ENCODE measurements at regions of chr6 and their contacts with region 1.

Region 1: DNA sequence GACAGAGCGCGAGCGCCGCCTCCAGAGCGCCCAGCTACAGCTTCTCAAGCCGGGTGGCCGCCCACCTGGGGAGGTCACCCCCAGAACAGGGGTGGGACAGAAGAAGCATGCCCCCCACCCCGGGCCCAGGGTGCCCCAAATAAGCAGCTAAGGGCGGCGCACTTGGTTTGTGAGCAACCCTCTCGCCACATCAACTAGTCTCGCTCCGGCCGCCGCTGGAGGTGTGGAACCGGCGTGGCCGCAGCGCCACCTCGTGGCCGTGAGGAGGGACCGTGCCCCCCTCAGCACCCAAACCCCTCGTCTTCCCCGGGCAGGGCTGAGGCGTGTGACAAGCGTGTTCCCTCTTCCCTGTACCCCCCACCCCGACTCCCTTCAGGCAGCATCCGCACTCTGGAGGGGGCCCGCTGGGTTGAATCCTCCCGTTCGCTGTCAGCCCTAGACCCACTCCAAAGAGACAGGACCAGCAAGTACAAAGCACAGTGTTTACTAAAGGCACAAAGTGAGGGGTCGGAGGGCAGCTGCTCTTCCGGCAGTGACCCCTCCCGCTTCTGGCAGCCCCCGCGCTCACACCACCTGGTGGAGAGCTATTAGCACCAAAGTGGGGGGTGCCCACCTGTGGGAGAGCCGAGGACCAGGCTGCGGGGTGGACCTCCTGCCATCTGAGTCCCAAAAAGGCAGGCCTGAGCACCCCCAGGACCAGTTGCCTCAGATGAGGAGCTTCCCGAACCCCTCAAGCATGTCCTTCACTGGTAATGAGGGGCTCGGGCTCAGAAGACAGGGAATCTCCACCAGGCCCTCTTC is 45.4 kb downstream of the MDFI start:
- DNase-seq: peak; percentile 65
- H3K4me3 Mint-ChIP-seq: no peak overlapping the region
- H3K27ac Mint-ChIP-seq: no peak overlapping the region
- H3K4me1 Mint-ChIP-seq: no peaks in the 10 kb centered on the region
- H3K27me3 Mint-ChIP-seq: no peaks in the 10 kb centered on the region
- CTCF ChIP-seq: peak; percentile 68

Region 2: DNA sequence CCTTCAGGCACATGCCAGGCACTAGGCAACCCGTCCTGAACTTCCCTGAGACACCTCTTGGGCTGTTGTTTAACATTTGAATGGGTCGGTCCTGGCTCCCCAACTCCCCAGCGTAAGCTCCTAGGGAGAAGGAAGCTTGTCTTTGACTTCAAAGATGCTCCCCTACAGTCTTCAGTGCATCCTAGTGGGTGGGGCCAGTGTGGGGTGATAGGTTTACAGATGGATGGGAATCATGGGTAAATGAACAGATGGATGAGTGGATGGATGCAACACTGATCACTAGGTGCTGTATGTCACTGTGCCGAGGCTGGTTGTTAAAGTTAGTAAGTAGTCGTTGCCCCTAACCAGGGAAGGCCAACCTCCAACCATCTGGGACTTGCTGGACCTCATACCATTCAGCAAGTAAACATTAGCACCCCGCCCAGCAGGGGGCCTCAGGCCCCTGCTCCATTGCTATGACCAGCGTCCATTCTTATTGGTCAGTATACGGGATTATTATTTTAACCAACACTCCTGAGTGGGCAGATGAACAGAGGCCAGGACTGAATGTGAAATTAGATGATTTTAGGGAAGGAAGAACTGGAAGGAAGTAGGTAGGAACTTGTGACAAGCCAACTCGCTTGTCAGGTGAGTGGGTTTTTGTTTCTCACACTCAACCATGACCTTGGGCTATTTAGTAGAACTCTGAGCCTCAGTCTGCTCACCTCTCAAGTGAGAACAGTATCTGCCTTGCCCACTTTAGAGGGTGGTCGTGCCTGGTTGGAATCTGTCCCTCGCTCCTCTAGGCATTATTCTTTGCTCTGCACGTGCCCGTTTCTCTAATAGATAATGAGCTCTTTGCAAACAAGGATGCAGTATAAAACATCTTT is 220.4 kb before region 1 on chr6:
- CTCF ChIA-PET with region 1: interaction called, 3 read pairs
- POLR2A ChIA-PET with region 1: no interaction called
- intact Hi-C with region 1: loop called (anchors 1 kb)
- DNase-seq: peak; percentile 68
- H3K4me3 Mint-ChIP-seq: no peak overlapping the region
- H3K27ac Mint-ChIP-seq: no peak overlapping the region
- H3K4me1 Mint-ChIP-seq: no peaks in the 10 kb centered on the region
- H3K27me3 Mint-ChIP-seq: peaks cover 37% of the 10 kb centered on the region
- CTCF ChIP-seq: peak; percentile 43

Region 3: GRCh38 chr6:41602864-41603608 is 80.7 kb before region 1 on chr6:
- CTCF ChIA-PET with region 1: interaction called, 137 read pairs
- POLR2A ChIA-PET with region 1: interaction called, 14 read pairs
- intact Hi-C with region 1: loop called (anchors 1 kb)
- DNase-seq: peak; percentile 87
- H3K4me3 Mint-ChIP-seq: no peak overlapping the region
- H3K27ac Mint-ChIP-seq: no peak overlapping the region
- H3K4me1 Mint-ChIP-seq: peaks cover 5% of the 10 kb centered on the region
- H3K27me3 Mint-ChIP-seq: no peaks in the 10 kb centered on the region
- CTCF ChIP-seq: peak; percentile 90